Tibial artery (tissue), 4 donors: ENCODE measurements at regions of chr14 and their contacts with region 1.

Region 1: GRCh38 chr14:90677484-90678050 is 138.7 kb downstream of the TTC7B start:
- DNase-seq: no peak
- H3K4me3 ChIP-seq: no peak overlapping the region
- H3K27ac ChIP-seq: peak overlapping the region; percentile 48 to 91
- H3K4me1 ChIP-seq: peaks cover 3 to 41% (median 22%) of the 10 kb centered on the region in 4 donors
- H3K27me3 ChIP-seq: no peaks in the 10 kb centered on the region
- CTCF ChIP-seq: no peak

Region 2: GRCh38 chr14:90522571-90523191 is 154.9 kb before region 1 on chr14:
- intact Hi-C with region 1: loop called (anchors 10 kb)
- DNase-seq: peak; percentile 59 to 93
- H3K4me3 ChIP-seq: peak overlapping the region in 1 of 2 donors; percentile 14
- H3K27ac ChIP-seq: peak overlapping the region; percentile 74 to 76
- H3K4me1 ChIP-seq: peaks cover 6 to 66% (median 52%) of the 10 kb centered on the region in 4 donors
- H3K27me3 ChIP-seq: no peaks in the 10 kb centered on the region
- CTCF ChIP-seq: no peak

Region 3: DNA sequence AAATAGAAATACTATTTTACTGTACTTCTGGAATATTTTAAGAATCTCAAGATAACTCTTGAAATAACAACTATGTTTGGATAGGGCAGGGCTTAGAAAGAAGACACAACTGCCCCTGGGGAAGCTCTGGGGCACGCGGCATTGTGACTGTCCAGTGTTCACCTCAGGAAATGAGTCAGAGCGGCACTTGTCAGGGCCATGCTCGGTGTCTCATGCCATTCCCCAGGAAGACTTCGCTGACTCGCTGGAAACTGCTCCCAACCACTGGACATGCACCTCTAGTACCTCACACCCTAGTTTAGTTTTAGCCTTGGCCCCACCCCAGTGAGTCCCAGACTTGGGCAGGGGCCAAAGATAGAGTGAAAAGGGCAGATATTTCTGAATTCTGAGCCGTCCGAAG is 53.3 kb before region 1 on chr14:
- intact Hi-C with region 1: loop called (anchors 10 kb)
- DNase-seq: peak; percentile 42 to 73
- H3K4me3 ChIP-seq: no peak overlapping the region
- H3K27ac ChIP-seq: peak overlapping the region; percentile 8 to 33
- H3K4me1 ChIP-seq: peaks cover 5 to 51% (median 38%) of the 10 kb centered on the region in 4 donors
- H3K27me3 ChIP-seq: no peaks in the 10 kb centered on the region
- CTCF ChIP-seq: no peak